ENCODE measurements at regions of chr18 and their contacts with region 1.

Region 1: GRCh38 chr18:24488824-24489493 is 28.5 kb downstream of the HRH4 start:
- DNase-seq: peak; percentile 27
- ATAC-seq: peak; percentile 38; the same call in 1 of the 2 replicates
- H3K4me3 ChIP-seq: no peak overlapping the region
- H3K27ac ChIP-seq: no peak overlapping the region
- H3K4me1 ChIP-seq: 0 out of 4 replicates have a peak, but pooled peaks cover 0 to 5% of the 10 kb centered on the region in 2 experiments
- H3K27me3 ChIP-seq: no peaks in the 10 kb centered on the region
- CTCF ChIP-seq: peak; percentile 51 to 83 (median 63); a peak in 5 of 6 replicates
- POLR2A ChIP-seq: no peak
- RAD21 ChIP-seq: peak; percentile 75

Region 2: DNA sequence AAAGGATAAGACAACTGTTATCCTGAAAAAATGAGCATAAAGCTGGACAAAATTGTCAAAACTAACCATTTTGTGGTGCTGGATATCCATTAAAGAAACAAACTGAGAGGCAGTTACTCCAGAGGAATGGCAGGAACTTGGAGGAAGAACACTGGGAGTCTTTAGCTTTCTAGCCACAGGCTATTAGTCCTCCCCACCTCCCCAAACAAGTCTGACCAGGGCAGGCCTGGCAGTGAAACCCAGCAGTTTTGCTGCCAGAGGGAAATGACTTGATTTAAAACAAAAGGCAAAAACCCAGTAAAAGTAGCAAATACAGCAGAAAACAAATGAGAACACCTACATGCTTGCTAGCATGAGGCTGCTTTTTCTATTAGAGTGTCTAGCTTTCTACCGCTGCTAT is 126.2 kb before region 1 on chr18:
- CTCF ChIA-PET with region 1: interaction called, 98 read pairs
- POLR2A ChIA-PET with region 1: no interaction called
- RAD21 ChIA-PET with region 1: interaction called, 10 to 18 read pairs
- intact Hi-C with region 1: loop called (anchors 1 kb)
- DNase-seq: no peak
- ATAC-seq: no peak
- H3K4me3 ChIP-seq: no peak overlapping the region
- H3K27ac ChIP-seq: no peak overlapping the region
- H3K4me1 ChIP-seq: peaks cover 2 to 7% of the 10 kb centered on the region in 2 experiments; a peak in 2 of 4 replicates
- H3K27me3 ChIP-seq: no peaks in the 10 kb centered on the region
- CTCF ChIP-seq: no peak
- POLR2A ChIP-seq: no peak
- RAD21 ChIP-seq: no peak

Region 3: DNA sequence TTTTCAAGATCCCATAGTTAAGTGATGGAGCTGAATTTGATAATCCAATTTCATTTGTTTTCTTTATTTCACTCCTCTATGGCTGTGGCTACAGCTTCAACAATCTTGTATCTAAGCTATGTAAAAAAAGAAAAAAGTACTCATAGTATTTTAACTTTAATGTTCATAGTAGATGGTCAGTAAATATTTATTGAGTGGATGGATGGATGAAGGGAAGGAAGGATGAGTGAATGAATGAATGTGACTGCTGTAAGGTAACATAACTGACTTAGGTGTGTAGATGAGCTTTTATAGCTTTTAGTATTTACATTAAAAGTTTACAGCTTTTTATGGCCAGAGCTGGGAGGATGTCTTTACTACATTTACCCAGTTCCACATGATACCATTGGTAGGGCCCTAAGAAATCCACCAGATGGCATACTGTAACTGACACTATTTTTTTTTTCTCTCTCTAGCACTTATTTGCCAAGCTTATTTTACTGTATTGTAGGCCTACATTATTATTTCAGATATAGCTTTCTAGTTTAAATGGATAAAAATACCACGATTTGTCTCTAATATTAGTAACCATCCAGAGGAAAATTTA is 41.9 kb before region 1 on chr18:
- CTCF ChIA-PET with region 1: interaction called, 21 read pairs
- POLR2A ChIA-PET with region 1: no interaction called
- RAD21 ChIA-PET with region 1: interaction called in 1 of 2 experiments, 3 read pairs
- intact Hi-C with region 1: no loop called
- DNase-seq: no peak
- ATAC-seq: peak; percentile 52; the same call in 1 of the 2 replicates
- H3K4me3 ChIP-seq: no peak overlapping the region
- H3K27ac ChIP-seq: no peak overlapping the region
- H3K4me1 ChIP-seq: no peaks in the 10 kb centered on the region
- H3K27me3 ChIP-seq: no peaks in the 10 kb centered on the region
- CTCF ChIP-seq: peak in 2 of 3 experiments; percentile 16 to 33; a peak in 3 of 6 replicates
- POLR2A ChIP-seq: no peak
- RAD21 ChIP-seq: no peak

Region 4: GRCh38 chr18:24514439-24514838 is 25.5 kb after region 1 on chr18:
- CTCF ChIA-PET with region 1: interaction called, 17 read pairs
- POLR2A ChIA-PET with region 1: no interaction called
- RAD21 ChIA-PET with region 1: interaction called in 1 of 2 experiments, 3 read pairs
- intact Hi-C with region 1: no loop called
- DNase-seq: peak; percentile 84
- ATAC-seq: peak; percentile 96
- H3K4me3 ChIP-seq: no peak overlapping the region
- H3K27ac ChIP-seq: no peak overlapping the region
- H3K4me1 ChIP-seq: peaks cover 0 to 4% of the 10 kb centered on the region in 2 experiments; a peak in 1 of 4 replicates
- H3K27me3 ChIP-seq: no peaks in the 10 kb centered on the region
- CTCF ChIP-seq: peak; percentile 24 to 80 (median 74); a peak in 5 of 6 replicates
- POLR2A ChIP-seq: no peak
- RAD21 ChIP-seq: no peak

Region 5: GRCh38 chr18:24726727-24727492 is 238.0 kb after region 1 on chr18:
- CTCF ChIA-PET with region 1: interaction called, 17 read pairs
- POLR2A ChIA-PET with region 1: no interaction called
- RAD21 ChIA-PET with region 1: interaction called, 3 to 5 read pairs
- intact Hi-C with region 1: loop called (anchors 2 kb)
- DNase-seq: peak; percentile 69
- ATAC-seq: peak; percentile 78
- H3K4me3 ChIP-seq: no peak overlapping the region
- H3K27ac ChIP-seq: no peak overlapping the region
- H3K4me1 ChIP-seq: no peaks in the 10 kb centered on the region
- H3K27me3 ChIP-seq: peaks cover 32% of the 10 kb centered on the region
- CTCF ChIP-seq: peak; percentile 64 to 93 (median 79); a peak in 5 of 6 replicates
- POLR2A ChIP-seq: no peak
- RAD21 ChIP-seq: peak; percentile 84

Measured in HCT116 (cell line).